Pancreas (tissue), 10 donors: ENCODE measurements at regions of chr12 and their contacts with region 1.

Region 1: GRCh38 chr12:65106948-65107347 is 14.2 kb downstream of the WIF1 start:
- DNase-seq: no peak
- ATAC-seq: peak in 1 of 4 donors; percentile 29
- H3K4me3 ChIP-seq: no peak overlapping the region
- H3K27ac ChIP-seq: no peak overlapping the region
- H3K4me1 ChIP-seq: no peaks in the 10 kb centered on the region
- H3K27me3 ChIP-seq: no peaks in the 10 kb centered on the region
- CTCF ChIP-seq: peak in 3 of 4 donors; percentile 17 to 20 (median 19)

Region 2: DNA sequence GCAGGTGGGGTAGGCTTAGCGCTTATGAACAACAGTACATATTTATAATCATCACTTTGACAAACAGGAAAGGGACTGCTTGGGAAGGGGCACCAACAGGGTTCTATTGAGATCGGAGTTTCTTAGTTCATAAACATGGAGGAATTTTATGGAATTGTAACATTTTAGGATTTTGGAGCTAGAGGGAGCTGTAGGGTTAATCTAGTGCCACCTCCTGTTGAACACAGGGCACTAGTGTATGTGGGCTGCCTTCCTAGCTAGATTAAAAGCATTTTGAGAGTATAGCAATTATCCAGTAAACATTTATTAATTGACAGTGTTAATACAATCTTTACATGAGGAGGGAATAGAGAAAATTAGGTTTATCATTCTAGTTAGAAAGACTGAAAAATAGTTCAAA is 305.6 kb before region 1 on chr12:
- intact Hi-C with region 1: loop called in 1 of 3 experiments (anchors 10 kb)
- DNase-seq: no peak
- ATAC-seq: peak in 3 of 4 donors; percentile 34 to 62 (median 53)
- H3K4me3 ChIP-seq: no peak overlapping the region
- H3K27ac ChIP-seq: no peak overlapping the region
- H3K4me1 ChIP-seq: peaks cover 6 to 17% (median 7%) of the 10 kb centered on the region in 3 donors
- H3K27me3 ChIP-seq: no peaks in the 10 kb centered on the region
- CTCF ChIP-seq: no peak

Region 3: DNA sequence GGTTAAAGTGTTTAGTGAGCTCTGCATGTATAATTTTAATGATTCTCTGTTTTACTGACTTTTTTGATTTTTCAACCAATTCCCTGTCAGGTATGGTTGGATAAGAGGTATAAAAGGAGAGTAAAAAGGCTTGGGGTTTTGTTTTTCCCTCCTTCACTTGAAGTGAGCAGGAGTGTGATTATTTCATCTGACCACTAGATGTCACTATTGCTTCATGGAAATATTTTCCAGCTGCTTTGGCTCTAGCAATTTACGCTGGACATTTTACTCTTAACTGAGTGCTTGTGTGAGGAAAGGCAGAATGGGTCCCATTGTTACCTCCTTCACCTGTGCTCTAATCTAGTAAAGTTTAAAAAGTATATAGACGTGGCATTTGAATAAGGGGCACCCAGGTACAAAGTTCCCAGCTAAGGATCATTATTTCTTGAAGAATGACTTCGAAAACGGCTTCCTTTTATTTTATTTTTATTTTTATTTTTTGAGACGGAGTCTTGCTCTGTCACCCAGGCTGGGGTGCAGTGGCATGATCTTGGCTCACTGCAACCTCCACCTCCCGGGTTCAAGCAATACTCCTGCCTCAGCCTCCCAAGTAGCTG is 216.0 kb before region 1 on chr12:
- intact Hi-C with region 1: loop called in 1 of 3 experiments (anchors 10 kb)
- DNase-seq: no peak
- ATAC-seq: peak; percentile 87 to 95 (median 92)
- H3K4me3 ChIP-seq: no peak overlapping the region
- H3K27ac ChIP-seq: no peak overlapping the region
- H3K4me1 ChIP-seq: no peaks in the 10 kb centered on the region
- H3K27me3 ChIP-seq: no peaks in the 10 kb centered on the region
- CTCF ChIP-seq: peak; percentile 66 to 71 (median 70)

Region 4: GRCh38 chr12:64976131-64976530 is 130.8 kb before region 1 on chr12:
- intact Hi-C with region 1: no loop called
- DNase-seq: no peak
- ATAC-seq: no peak
- H3K4me3 ChIP-seq: no peak overlapping the region
- H3K27ac ChIP-seq: no peak overlapping the region
- H3K4me1 ChIP-seq: no peaks in the 10 kb centered on the region
- H3K27me3 ChIP-seq: no peaks in the 10 kb centered on the region
- CTCF ChIP-seq: no peak